Aorta (tissue), 5 donors: ENCODE measurements at regions of chr2 and their contacts with region 1.

Region 1: DNA sequence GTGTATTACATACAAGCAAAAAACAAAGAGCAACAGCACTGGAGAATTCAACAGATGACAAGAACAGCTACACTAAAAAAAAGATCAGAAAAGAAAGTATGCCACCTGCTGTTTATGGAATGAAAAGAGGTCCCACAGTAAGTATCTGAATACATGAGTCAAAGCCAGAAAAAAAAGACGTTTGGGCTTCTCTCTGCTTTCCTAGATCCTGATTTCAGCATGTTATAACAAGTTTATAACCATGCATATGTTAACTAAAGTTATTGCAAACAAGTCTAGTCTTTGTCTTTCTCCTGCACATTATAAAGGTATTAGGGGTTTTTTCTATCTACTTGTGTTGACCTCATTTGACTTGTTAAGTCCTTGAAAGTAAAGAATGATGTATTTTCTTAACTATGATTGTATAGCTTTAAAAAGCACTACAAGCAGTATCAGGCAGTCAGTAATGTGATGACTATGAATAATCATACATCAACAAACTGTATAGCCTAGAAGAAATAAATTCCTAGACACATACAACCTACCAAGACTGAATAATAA is 108.5 kb upstream of the COL5A2 start:
- DNase-seq: no peak
- ATAC-seq: peak; percentile 86
- H3K4me3 ChIP-seq: no peak overlapping the region
- H3K27ac ChIP-seq: no peak overlapping the region
- H3K4me1 ChIP-seq: peaks cover 0 to 8% of the 10 kb centered on the region in 2 donors
- H3K27me3 ChIP-seq: no peaks in the 10 kb centered on the region

Region 2: DNA sequence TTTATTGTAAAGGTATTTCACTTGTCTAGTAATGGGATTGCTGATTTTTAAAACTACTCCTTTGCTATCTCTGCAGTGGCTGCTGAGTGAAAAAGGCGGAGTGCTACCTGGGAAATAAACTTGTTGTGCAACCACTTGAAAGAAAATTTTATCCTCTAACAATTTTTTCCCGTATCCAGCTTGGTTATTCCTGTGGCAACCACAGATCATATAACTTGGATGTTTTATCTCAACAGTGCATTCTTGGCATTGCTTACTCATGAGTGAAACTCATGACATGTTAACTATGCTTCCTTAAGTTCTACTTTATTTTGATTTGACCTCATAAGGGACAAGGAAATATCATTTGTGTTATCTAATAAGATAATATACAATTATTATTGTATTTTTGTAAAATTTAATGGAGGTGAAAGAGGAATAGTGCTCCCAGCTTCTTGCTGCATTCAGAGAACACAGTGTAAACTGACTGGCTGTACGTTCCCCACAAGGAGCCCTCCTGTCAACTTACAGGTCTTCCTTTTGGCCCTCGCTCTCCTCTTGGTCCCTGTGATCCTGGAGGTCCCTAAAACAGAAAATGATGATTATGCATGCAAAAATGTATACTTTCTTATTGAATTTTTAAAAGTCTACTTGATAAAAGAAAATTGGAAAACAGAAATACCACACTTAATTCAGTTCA is 191.1 kb before region 1 on chr2:
- intact Hi-C with region 1: loop called (anchors 2 to 5 kb)
- DNase-seq: no peak
- ATAC-seq: no peak
- H3K4me3 ChIP-seq: no peak overlapping the region
- H3K27ac ChIP-seq: no peak overlapping the region
- H3K4me1 ChIP-seq: peaks cover 0 to 1% of the 10 kb centered on the region in 2 donors
- H3K27me3 ChIP-seq: no peaks in the 10 kb centered on the region

Region 3: DNA sequence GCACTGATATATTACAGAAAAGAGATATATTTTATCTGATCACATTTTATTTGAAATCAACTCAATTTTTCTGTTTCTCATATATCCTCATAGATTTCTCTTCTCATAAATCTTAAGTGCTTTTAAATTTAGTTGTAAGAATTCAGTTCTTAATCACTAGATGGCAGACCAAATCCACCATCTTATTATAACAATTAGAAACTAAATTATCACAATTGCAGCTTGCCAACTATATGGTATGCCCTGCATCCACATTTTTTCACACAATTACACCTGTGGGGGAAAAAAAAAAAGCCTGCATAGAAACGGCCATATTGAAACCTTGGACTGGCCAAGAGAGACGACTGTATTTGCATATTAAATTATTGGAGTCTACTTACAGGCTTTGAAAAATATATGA is 172.9 kb before region 1 on chr2:
- intact Hi-C with region 1: loop called (anchors 5 kb)
- DNase-seq: no peak
- ATAC-seq: no peak
- H3K4me3 ChIP-seq: peak overlapping the region in 1 of 2 donors; percentile 18
- H3K27ac ChIP-seq: no peak overlapping the region
- H3K4me1 ChIP-seq: peaks cover 0 to 5% of the 10 kb centered on the region in 2 donors
- H3K27me3 ChIP-seq: no peaks in the 10 kb centered on the region

Region 4: GRCh38 chr2:189179570-189179950 is 108.5 kb before region 1 on chr2 and contains the start of gene COL5A2:
- intact Hi-C with region 1: loop called in 1 of 2 experiments (anchors 2 kb)
- DNase-seq: peak; percentile 49 to 75
- ATAC-seq: peak; percentile 91
- H3K4me3 ChIP-seq: peak within 1 kb of the TSS; percentile 100
- H3K27ac ChIP-seq: peak within 1 kb of the TSS; percentile 67 to 85
- H3K4me1 ChIP-seq: no peaks in the 10 kb centered on the region
- H3K27me3 ChIP-seq: no peaks in the 10 kb centered on the region
- total RNA-seq, gene COL5A2: 81.0 to 115 TPM

Region 5: DNA sequence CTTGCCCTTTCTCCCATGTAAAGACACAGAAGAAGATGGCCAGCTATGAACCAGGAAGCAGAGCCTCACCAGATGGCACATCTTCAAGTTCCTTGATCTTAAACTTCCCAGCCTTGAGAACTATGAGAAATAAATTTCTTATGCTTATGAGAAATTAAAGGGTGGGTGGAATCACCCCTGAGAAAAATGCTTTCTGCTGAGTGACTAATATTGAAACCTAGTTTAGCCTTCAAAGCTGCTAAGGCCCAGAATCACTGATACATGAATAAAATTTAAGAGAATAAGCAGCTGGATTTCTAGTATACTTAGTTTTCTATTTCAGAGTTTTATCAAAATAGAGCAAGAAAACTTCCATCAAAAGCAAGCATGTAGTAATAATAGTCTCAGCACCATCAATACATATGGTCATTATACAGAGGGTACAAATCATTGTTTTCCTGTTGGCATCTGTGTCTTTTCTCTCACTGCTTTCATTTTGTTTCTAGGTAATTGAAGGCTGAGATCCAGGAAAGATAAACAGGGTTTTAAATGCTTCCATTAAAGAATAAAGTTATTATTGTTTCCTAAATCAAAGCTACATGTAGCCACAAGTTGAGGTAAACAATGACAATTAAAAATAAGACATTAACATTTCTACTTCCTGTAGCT is 55.2 kb before region 1 on chr2:
- intact Hi-C with region 1: no loop called
- DNase-seq: no peak
- ATAC-seq: no peak
- H3K4me3 ChIP-seq: no peak overlapping the region
- H3K27ac ChIP-seq: no peak overlapping the region
- H3K4me1 ChIP-seq: peaks cover 0 to 2% of the 10 kb centered on the region in 2 donors
- H3K27me3 ChIP-seq: no peaks in the 10 kb centered on the region

Region 6: DNA sequence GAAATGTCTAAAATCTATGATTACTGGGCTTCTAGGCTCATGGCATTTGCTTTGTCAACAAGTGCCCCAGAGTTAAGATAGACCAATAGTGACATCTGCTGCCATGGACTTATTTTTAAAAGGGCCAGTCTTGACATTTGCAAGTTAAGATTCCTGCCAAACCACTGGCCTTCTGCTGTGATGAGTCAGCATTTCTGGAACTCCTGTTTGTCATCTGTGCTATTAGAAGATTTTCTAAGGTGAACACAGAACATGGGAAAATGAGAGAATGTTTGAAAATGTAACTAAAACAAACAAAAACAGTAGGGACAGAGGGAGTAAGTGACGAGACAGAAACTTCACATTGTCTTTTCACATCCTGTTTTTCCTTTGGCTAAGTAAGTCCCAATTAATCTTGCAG is 59.5 kb after region 1 on chr2:
- intact Hi-C with region 1: loop called in 1 of 2 experiments (anchors 5 kb)
- DNase-seq: no peak
- ATAC-seq: peak; percentile 84
- H3K4me3 ChIP-seq: no peak overlapping the region
- H3K27ac ChIP-seq: no peak overlapping the region
- H3K4me1 ChIP-seq: no peaks in the 10 kb centered on the region
- H3K27me3 ChIP-seq: no peaks in the 10 kb centered on the region